ENCODE measurements at regions of chr21 and their contacts with region 1.

Region 1: GRCh38 chr21:31098576-31099005 is 60.3 kb upstream of the KRTAP19-8 start:
- DNase-seq: no peak
- H3K4me3 ChIP-seq: no peak overlapping the region
- H3K27me3 ChIP-seq: no peaks in the 10 kb centered on the region
- CTCF ChIP-seq: peak; percentile 89

Region 2: DNA sequence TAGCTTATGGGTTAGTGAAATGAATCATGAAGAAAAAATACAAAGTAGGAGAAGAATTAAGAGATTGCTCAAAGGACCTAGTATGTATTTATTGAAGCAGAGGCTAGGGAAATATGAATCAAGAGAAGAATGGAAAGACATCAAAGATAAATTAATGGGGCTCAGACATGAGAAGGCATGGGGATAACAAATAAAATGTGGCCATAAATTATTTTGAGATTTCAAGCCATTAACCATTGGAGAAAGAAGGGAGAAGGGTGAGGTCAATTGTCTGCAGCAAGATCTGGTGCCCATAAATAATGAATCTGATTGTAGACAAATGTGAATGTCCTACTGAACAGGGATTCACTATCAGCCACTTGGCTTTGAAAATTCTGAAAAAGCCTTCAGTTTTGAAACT is 445.7 kb before region 1 on chr21:
- CTCF ChIA-PET with region 1: no interaction called
- POLR2A ChIA-PET with region 1: no interaction called
- DNase-seq: no peak
- H3K4me3 ChIP-seq: no peak overlapping the region
- H3K27me3 ChIP-seq: no peaks in the 10 kb centered on the region
- CTCF ChIP-seq: no peak

Region 3: DNA sequence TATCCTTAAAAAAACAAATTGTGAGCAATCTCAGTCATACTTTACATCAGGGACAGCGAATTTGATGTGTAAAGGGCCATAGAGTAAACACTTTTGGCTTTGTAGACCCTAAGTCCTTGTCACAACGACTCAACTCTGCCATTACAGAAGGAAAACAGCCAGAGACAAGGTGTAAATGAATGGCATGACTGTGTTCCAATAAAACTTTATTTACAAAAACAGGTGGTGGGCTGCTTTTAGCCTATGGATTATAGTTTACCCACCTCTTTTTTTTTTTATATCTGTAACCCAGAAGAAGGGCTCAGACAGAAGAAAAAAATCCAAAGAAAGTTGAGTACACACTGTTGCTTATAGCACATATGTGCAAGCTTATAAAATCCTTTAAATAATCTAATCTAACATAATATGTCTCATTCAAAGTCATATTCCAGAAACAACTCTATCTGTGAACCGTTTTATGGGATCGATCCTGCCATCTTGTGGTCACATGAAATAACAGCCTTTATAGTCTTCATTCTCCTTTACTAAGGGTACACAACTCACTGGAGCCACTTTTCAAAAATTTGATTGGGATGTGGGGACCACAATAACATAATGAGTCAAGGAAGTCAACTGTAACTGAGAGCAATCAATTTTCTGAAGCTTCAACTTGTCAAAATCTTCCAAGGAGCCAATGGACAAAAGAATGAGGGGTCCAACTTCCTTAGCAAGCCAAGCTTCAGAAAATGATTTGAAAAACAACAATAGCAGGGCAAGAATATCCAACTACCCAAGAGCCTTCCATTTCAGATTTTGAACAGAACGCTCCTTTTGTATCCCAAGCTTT is 81.9 kb after region 1 on chr21:
- CTCF ChIA-PET with region 1: interaction called, 32 read pairs
- POLR2A ChIA-PET with region 1: no interaction called
- DNase-seq: no peak
- H3K4me3 ChIP-seq: no peak overlapping the region
- H3K27me3 ChIP-seq: no peaks in the 10 kb centered on the region
- CTCF ChIP-seq: peak; percentile 54

Measured in BJ (cell line).